Caki2 (cell line): ENCODE measurements at regions of chr12 and their contacts with region 1.

Region 1: DNA sequence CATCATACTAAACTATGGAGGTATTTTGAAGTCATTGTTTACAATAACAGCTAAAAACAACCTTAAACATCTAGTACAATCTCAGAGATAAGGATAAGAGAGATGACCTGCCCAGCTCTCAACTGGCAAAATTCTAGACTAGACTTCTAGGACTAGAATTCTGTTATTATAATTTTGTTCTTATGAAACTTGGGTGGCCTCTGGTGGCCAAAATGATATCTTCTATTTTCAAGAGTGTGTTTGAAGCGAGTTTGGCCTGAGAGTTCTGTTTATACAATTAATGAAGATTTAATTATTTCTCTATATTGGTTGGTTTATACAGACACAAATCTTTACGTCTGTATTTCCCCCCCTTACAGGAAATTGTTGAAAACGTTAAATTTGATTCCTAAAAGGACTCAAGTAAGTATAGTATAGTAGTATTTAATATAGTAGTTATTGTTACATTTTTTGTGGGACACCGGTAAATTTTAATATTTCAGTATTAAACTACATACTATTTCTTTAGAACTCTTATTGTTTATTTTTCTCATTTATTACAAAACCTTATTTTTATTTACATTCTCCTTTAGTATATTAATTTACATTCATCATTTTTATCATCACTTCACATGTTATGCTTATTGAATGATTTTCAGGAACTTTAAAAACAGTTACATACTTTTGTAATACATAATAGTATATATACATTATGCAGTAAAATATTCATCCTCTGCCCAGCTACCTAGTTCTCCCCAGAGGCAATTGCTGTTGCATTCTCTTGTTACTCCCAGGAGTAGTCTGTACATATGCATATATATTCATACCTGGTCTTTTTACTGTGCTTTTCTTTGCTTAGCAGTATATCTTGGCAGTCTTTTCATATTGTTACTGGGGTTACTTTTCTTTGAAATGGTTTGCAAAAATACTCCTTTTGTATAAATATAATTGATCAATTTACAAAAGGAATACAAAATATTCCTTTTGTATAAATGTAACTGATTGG is 6.6 kb downstream of the PPHLN1 start:
- DNase-seq: peak; percentile 29

Region 2: GRCh38 chr12:42364698-42365097 is 32.1 kb after region 1 on chr12:
- in situ Hi-C with region 1: loop called (anchors 5 kb)
- DNase-seq: peak; percentile 61

Region 3: GRCh38 chr12:42458575-42458974 is 126.0 kb after region 1 on chr12:
- in situ Hi-C with region 1: no loop called
- DNase-seq: no peak

Region 4: DNA sequence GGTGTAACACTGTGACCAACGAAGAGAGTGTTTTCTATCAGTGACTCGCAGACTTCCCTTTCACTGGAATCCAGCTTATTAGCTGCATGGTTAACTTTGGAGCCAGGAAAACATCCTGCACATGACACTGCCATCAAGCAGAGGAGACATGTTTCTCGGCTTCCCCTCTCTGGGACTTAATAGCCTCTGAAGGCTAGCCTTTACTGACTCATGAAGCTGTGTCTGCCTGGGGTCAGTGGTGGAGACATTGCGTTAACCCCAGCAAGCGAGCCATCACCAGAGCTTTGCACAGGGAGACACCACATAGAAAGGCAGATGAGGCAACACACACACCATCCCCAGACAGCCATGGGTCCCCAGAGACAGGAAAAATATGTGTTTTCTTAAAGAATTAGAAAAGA is 383.9 kb after region 1 on chr12:
- in situ Hi-C with region 1: no loop called
- DNase-seq: peak; percentile 60